MCF 10A (cell line): ENCODE measurements at regions of chr21 and their contacts with region 1.

Region 1: DNA sequence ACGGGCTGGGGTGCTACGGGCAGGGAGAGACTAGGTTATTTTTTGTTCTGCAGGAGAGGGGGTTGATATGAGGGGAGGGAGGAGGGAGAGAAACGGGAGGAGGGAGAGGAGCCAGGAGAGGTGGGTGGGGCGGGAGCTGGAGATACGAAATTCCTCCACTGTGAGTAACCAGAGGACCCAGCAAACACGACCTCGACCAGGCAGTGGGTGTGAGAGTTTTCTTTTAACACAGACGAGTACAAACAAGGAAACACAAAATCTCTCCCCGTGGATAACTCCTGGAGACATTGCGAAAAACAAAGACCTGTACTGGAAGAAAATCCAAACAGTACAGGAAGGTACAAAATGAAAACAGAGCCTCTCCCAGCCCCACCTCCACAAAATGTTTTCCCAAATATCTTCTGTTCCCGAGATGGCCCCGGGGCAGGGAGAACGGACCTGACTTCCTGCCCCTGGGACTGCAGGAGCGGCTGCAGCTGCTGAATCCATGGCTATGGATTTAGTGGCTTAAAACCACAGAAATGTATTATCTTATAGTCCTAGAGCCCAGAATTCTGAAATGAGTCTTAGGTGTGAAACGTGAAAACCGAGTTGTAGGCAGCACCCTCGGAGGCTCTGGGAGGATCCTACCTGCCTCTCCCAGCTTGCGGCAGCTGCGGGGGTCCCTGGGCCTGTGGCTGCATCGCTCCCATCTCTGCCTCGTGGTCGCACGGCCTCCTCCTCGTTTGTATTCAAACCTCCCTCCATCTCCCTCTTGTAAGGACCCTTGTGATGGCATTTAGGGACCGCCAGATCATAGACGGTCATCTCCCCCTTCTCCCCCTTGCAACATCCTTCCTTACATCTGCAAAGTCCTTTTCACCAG is 82.2 kb downstream of the RIPK4 start:
- DNase-seq: peak; percentile 72
- H3K4me3 Mint-ChIP-seq: peak overlapping the region; percentile 57
- H3K27ac Mint-ChIP-seq: peak overlapping the region; percentile 86
- H3K4me1 Mint-ChIP-seq: peaks cover 44% of the 10 kb centered on the region
- H3K27me3 Mint-ChIP-seq: no peaks in the 10 kb centered on the region
- CTCF ChIP-seq: no peak

Region 2: DNA sequence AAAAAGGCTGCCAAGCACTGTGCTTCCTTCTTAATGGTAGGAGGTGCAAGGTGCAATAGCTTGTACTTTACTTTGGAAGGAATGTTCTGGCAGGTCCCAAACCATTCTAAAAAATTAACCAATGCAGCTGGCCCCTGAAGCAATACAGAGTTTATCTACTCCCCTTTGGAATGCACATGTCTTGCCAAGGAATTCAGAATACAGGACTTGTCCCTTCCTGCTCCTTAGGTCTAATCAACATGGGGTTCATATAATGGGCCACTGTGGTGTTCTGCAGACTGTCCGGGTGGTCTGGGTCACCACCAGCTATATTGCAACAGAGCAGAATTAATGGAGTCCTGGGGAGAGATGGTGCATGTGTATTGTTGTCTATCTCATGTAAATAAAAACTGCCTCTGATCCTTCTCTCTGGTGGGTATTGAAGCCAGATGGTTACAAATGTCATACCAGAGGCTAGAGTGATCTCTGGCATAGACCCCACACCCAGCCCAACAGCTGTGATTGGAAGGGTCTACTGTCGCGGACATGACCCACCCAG is 30.6 kb before region 1 on chr21:
- CTCF ChIA-PET with region 1: no interaction called
- POLR2A ChIA-PET with region 1: interaction called, 34 read pairs
- intact Hi-C with region 1: no loop called
- DNase-seq: peak; percentile 74
- H3K4me3 Mint-ChIP-seq: peak overlapping the region; percentile 39
- H3K27ac Mint-ChIP-seq: peak overlapping the region; percentile 64
- H3K4me1 Mint-ChIP-seq: peaks cover 37% of the 10 kb centered on the region
- H3K27me3 Mint-ChIP-seq: no peaks in the 10 kb centered on the region
- CTCF ChIP-seq: no peak

Region 3: GRCh38 chr21:41715649-41716281 is 31.2 kb after region 1 on chr21:
- CTCF ChIA-PET with region 1: no interaction called
- POLR2A ChIA-PET with region 1: interaction called, 22 read pairs
- intact Hi-C with region 1: no loop called
- DNase-seq: peak; percentile 69
- H3K4me3 Mint-ChIP-seq: no peak overlapping the region
- H3K27ac Mint-ChIP-seq: peak overlapping the region; percentile 87
- H3K4me1 Mint-ChIP-seq: peaks cover 23% of the 10 kb centered on the region
- H3K27me3 Mint-ChIP-seq: no peaks in the 10 kb centered on the region
- CTCF ChIP-seq: no peak

Region 4: GRCh38 chr21:41752231-41752681 is 67.6 kb after region 1 on chr21:
- CTCF ChIA-PET with region 1: interaction called, 3 read pairs
- POLR2A ChIA-PET with region 1: interaction called, 21 read pairs
- intact Hi-C with region 1: no loop called
- DNase-seq: peak; percentile 84
- H3K4me3 Mint-ChIP-seq: peak overlapping the region; percentile 64
- H3K27ac Mint-ChIP-seq: peak overlapping the region; percentile 87
- H3K4me1 Mint-ChIP-seq: peaks cover 32% of the 10 kb centered on the region
- H3K27me3 Mint-ChIP-seq: no peaks in the 10 kb centered on the region
- CTCF ChIP-seq: no peak

Region 5: GRCh38 chr21:41768437-41769061 is 83.9 kb after region 1 on chr21:
- CTCF ChIA-PET with region 1: interaction called, 8 read pairs
- POLR2A ChIA-PET with region 1: interaction called, 131 read pairs
- intact Hi-C with region 1: loop called (anchors 2 kb)
- DNase-seq: peak; percentile 72
- H3K4me3 Mint-ChIP-seq: peak overlapping the region; percentile 87
- H3K27ac Mint-ChIP-seq: peak overlapping the region; percentile 87
- H3K4me1 Mint-ChIP-seq: peaks cover 25% of the 10 kb centered on the region
- H3K27me3 Mint-ChIP-seq: no peaks in the 10 kb centered on the region
- CTCF ChIP-seq: peak; percentile 28